Mammary epithelial cell (primary cell): ENCODE measurements at regions of chr15 and their contacts with region 1.

Region 1: DNA sequence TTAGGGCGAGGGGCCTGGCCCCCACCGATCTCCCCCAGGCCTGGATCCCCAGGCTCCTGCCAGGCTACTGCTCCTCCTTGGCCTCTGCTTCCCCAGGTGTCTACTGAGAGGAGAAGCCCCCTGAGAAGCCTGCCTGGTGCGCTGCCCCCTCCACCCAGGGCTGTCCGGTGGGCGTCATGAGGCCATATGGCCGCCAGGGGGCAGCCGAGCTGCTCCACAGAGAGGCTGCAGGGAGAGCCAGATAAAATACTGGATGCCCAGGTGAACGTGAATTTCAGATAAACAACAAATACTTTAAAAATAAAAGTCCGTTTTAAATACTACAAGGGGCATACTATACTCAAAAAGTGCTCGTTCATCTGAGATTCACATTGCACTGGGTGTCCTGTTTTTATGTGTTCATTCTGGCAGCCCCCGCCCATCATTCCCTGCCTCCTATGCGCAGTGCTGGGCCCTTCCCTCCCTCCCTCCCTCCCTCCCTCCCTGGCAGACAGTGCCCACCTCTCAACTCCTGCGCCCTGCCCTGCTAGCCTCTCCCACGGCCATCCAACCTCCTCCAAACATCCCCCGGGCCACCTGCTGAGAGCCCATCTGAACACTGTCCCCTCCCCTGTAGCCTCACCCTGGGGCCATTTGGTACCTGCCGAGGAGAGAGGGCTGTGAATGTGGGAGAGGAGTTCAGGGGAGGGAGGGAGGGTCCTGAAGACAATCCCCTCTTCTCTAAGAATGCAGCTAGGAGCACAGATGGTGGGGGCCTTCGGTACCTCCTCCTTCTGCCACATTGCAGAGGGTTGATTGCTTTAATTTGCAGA is 29.6 kb downstream of the PSTPIP1 start:
- DNase-seq: peak; percentile 21
- H3K4me3 ChIP-seq: no peak overlapping the region
- H3K27ac ChIP-seq: no peak overlapping the region
- H3K4me1 ChIP-seq: peaks cover 12% of the 10 kb centered on the region
- H3K27me3 ChIP-seq: no peaks in the 10 kb centered on the region
- CTCF ChIP-seq: peak; percentile 75 to 88

Region 2: GRCh38 chr15:76905013-76905839 is 119.3 kb before region 1 on chr15 and contains the start of gene SCAPER:
- CTCF ChIA-PET with region 1: no interaction called
- dilution Hi-C with region 1: no loop called
- in situ Hi-C with region 1: no loop called
- intact Hi-C with region 1: loop called (anchors 5 kb)
- DNase-seq: peak; percentile 84
- H3K4me3 ChIP-seq: peak within 1 kb of the TSS; percentile 85 to 97 (median 91)
- H3K27ac ChIP-seq: peak within 1 kb of the TSS; percentile 43
- H3K4me1 ChIP-seq: peaks cover 12% of the 10 kb centered on the region
- H3K27me3 ChIP-seq: no peaks in the 10 kb centered on the region
- CTCF ChIP-seq: no peak
- total RNA-seq, gene SCAPER: 9.2 to 11.6 TPM

Region 3: DNA sequence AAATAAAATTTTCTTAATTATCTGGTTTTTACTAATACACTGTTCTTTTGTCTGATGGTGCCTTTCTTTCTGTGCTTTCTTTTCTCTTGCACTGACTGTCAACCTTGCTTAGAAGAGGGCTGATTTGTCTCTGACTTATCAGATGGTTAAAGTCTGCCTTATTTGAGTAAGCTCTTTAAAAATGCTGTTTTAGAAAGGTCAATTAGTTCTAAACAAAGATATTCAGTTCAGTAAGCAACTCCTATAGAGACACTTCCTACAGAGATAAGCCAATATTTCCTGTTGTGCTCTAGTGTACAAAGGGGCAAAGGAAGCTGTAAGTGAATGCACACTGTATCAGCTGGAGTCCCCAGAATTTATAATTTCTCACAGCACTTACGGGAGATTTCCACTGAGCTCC is 199.9 kb after region 1 on chr15:
- CTCF ChIA-PET with region 1: no interaction called
- dilution Hi-C with region 1: no loop called
- in situ Hi-C with region 1: no loop called
- intact Hi-C with region 1: no loop called
- DNase-seq: no peak
- H3K4me3 ChIP-seq: no peak overlapping the region
- H3K27ac ChIP-seq: no peak overlapping the region
- H3K4me1 ChIP-seq: no peaks in the 10 kb centered on the region
- H3K27me3 ChIP-seq: no peaks in the 10 kb centered on the region
- CTCF ChIP-seq: no peak